ENCODE measurements at regions of chr18 and their contacts with region 1.

Region 1: DNA sequence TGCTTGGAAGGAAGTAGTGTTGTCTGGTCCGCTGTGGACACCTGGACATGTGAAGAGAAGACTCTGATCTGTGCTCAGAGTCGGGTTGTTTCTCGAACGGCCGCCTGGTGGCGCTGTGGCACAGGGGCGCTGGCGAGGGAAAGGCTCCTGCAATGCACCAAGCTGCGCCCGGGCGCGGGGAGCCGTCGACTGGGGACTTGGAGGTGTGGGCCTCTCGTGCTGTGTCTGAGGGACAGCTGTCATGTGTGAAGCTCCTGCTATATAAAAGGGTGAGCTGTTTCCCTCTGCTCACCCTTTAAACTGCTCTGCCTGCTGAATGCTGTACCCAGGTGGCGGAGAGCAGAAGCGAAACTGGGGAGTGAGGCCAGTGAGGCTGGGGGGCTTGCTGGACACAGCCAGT is 44.0 kb downstream of the GNAL start:
- DNase-seq: peak; percentile 78
- ATAC-seq: peak; percentile 87
- H3K4me3 Mint-ChIP-seq: no peak overlapping the region
- H3K27ac Mint-ChIP-seq: no peak overlapping the region
- H3K4me1 Mint-ChIP-seq: no peaks in the 10 kb centered on the region
- H3K27me3 Mint-ChIP-seq: peaks cover 33% of the 10 kb centered on the region

Region 2: GRCh38 chr18:11246495-11247300 is 486.3 kb before region 1 on chr18:
- CTCF ChIA-PET with region 1: no interaction called
- DNase-seq: no peak
- ATAC-seq: no peak
- H3K4me3 Mint-ChIP-seq: no peak overlapping the region
- H3K27ac Mint-ChIP-seq: no peak overlapping the region
- H3K4me1 Mint-ChIP-seq: no peaks in the 10 kb centered on the region
- H3K27me3 Mint-ChIP-seq: no peaks in the 10 kb centered on the region

Region 3: DNA sequence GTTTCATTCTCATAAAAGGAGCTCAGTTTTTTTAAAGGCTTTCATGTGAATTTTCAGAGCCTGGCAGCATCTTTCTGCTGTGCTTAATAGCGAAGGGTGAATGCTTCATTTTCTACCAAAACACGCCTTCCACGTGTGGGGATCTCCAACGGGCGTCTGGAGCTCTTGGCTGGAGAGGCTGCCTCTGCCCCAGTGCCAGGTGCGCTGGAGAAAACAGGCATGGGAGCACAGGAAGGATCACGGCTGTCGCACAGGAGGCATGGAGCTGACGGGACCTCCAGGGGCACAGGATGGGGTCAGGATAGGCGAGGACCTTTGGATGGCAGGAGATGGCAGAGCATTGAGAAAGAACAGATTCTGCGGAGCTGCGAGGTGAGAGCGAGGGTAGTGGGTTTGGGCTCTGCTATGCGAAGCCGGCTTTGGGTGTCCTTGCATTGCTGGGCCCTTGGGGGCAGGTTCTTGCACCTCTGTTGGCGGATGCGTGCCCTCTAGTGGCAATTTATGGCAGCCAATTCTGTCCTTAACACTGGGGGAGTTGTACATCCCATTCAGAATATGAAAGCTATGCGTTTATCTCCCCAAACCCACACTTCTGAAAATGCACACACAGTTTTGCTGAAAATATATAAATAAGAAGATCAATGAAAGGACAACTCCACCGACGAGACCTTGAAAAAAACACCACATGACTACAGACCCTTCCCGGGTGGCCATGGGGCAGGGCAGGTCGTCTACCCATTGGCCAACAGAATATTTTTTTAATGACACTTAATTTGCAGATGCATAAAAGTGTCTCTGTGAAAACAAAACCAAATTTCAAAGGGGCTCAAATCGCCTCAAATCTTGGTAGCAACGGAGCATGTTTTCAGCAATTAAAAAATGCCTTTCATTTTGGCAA is 214.0 kb before region 1 on chr18:
- CTCF ChIA-PET with region 1: no interaction called
- DNase-seq: peak; percentile 68
- ATAC-seq: peak; percentile 71
- H3K4me3 Mint-ChIP-seq: no peak overlapping the region
- H3K27ac Mint-ChIP-seq: no peak overlapping the region
- H3K4me1 Mint-ChIP-seq: no peaks in the 10 kb centered on the region
- H3K27me3 Mint-ChIP-seq: peaks cover 5% of the 10 kb centered on the region

Region 4: GRCh38 chr18:11654736-11655605 is 78.1 kb before region 1 on chr18:
- CTCF ChIA-PET with region 1: interaction called, 26 read pairs
- DNase-seq: peak; percentile 51
- ATAC-seq: no peak
- H3K4me3 Mint-ChIP-seq: no peak overlapping the region
- H3K27ac Mint-ChIP-seq: no peak overlapping the region
- H3K4me1 Mint-ChIP-seq: no peaks in the 10 kb centered on the region
- H3K27me3 Mint-ChIP-seq: peaks cover 34% of the 10 kb centered on the region

Region 5: DNA sequence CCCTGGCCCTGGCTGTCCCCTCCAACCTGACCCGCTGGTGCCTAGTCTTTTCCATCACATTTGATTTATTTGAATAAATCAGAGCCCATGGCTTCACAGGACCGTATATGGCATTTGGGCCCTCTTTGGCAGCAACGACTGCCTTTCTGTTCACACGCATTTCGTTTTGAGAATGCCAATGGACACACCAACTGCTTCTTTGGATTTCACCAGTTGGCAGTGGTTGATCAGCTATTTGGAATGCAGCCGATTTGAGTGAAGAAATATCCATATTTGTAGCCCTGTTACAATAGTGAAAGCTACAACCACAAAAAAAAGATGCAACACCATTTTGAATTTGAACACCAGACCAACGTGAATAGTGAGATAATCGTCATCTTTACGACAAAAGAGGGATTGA is 12.5 kb after region 1 on chr18:
- CTCF ChIA-PET with region 1: interaction called, 10 read pairs
- DNase-seq: no peak
- ATAC-seq: no peak
- H3K4me3 Mint-ChIP-seq: no peak overlapping the region
- H3K27ac Mint-ChIP-seq: no peak overlapping the region
- H3K4me1 Mint-ChIP-seq: peaks cover 1% of the 10 kb centered on the region
- H3K27me3 Mint-ChIP-seq: peaks cover 63% of the 10 kb centered on the region

Region 6: DNA sequence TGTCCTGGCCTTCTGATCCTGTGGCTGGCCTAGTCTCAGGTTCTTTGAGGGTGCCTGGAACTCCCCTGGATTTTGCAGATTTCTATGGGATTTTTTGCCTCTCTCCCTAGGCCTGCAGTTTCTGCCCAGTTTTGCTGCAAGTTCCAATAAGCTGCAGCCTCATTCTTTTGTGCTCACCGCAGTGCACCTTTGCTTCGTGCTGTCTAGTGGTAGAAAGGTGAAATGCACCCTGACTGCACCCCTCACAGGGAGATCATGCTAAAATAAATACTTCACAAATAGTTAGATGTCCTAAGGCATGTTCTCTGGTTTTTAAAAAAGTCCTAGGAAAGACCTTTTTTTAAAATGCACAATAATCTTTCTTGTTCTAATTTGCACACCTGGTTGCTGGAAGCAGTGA is 28.5 kb after region 1 on chr18:
- CTCF ChIA-PET with region 1: interaction called, 10 read pairs
- DNase-seq: no peak
- ATAC-seq: no peak
- H3K4me3 Mint-ChIP-seq: no peak overlapping the region
- H3K27ac Mint-ChIP-seq: no peak overlapping the region
- H3K4me1 Mint-ChIP-seq: peaks cover 10% of the 10 kb centered on the region
- H3K27me3 Mint-ChIP-seq: peaks cover 9% of the 10 kb centered on the region

Region 7: GRCh38 chr18:11785458-11786055 is 52.5 kb after region 1 on chr18:
- CTCF ChIA-PET with region 1: no interaction called
- DNase-seq: no peak
- ATAC-seq: no peak
- H3K4me3 Mint-ChIP-seq: no peak overlapping the region
- H3K27ac Mint-ChIP-seq: no peak overlapping the region
- H3K4me1 Mint-ChIP-seq: no peaks in the 10 kb centered on the region
- H3K27me3 Mint-ChIP-seq: peaks cover 37% of the 10 kb centered on the region

Region 8: DNA sequence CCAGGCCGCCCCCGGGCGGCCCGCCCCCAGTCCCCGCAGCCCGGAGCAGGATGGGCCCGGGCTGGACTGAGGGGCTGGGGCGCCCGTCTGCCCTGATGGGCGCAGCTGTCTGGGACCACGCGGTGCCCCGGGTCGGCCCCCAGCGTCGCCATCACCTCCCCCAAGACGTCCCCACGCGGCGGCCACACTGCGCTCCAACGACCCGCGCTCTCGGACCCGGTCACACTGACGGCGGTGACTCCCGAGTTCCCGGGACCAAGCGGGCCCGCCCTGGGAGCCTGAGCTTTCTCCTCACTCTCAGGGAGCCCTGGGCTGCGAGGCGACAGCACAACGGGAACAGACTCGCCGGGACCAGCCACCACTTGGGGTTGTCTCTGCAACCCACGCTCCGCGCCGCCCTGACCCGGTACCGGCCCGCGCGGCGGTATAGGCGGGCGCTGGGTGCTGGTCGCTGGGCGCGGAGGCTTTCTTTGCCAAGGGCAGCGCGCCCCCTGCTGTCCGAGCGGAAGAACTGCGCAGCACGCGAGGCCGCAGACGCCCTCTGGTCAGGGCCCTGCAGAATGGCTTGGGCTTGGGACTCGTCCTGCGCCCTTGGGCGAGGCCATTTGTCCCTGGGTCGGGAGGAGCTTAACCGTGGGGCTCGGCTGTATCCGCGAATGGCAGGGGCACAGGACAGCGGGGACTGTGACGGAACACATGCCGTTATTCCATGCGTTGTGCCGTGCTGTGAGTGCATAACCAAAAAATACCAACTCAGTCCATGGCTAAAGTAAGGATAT is 305.8 kb after region 1 on chr18:
- CTCF ChIA-PET with region 1: interaction called, 15 read pairs
- DNase-seq: peak; percentile 80
- ATAC-seq: peak; percentile 89
- H3K4me3 Mint-ChIP-seq: peak overlapping the region; percentile 45
- H3K27ac Mint-ChIP-seq: no peak overlapping the region
- H3K4me1 Mint-ChIP-seq: peaks cover 14% of the 10 kb centered on the region
- H3K27me3 Mint-ChIP-seq: peaks cover 21% of the 10 kb centered on the region

Region 9: DNA sequence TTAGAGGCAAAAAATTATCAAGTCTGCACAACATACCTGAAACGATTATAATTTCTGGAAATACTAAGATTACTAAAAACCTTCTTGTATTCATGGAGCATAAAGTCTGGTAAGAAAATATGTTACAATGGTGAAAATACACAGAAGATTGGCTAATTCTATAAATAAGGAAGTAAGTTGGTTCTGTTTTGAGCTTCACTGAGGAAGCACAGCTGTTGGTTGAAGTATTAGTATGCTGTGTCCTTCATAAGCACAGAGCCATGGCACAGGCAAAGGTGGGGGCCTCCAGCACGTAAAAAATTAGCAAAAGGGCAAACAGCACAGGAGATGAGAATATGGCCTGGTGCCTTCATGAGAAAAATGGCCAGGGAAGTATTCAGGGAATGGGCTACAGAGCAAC is 320.3 kb after region 1 on chr18:
- CTCF ChIA-PET with region 1: no interaction called
- DNase-seq: no peak
- ATAC-seq: no peak
- H3K4me3 Mint-ChIP-seq: no peak overlapping the region
- H3K27ac Mint-ChIP-seq: no peak overlapping the region
- H3K4me1 Mint-ChIP-seq: peaks cover 6% of the 10 kb centered on the region
- H3K27me3 Mint-ChIP-seq: peaks cover 38% of the 10 kb centered on the region

Measured in activated CD8-positive, alpha-beta memory T cell treated with anti-CD3 and anti-CD28 coated beads, Interleukin-2, amount 10 ng/mL, durations not matched to agents 7 days and 5 days (primary cell).